ENCODE measurements at regions of chr3 and their contacts with region 1.

Region 1: DNA sequence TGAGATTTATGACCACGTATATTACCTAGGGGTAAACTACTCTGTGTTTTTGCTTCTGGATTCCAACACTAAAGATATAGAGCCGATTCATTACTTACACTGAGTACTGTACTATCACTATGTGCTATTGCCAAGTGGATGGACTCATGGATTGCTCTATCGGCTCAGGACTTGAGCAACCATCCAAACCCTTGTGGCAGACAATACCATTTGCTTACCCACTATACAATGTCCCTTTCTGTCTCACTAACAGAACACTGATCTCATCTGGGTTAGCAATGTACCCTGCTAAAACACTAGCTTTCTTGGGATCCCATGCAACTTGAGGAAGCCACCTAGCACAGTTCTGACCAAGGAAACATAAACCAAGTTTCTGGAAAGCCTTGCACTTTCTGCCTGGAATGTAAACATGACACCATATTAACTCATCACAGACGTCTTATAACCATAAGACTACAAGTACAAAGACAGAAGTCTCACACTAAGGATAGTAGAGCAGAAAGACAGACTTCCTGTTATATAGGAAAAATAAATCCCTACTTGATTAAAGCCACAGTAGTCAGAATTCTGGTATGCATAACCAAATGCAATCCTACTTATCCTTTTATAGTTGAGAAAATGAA is 38.6 kb downstream of the HACD2 start:
- DNase-seq: peak; percentile 26
- H3K4me3 ChIP-seq: no peak overlapping the region
- H3K27me3 ChIP-seq: no peaks in the 10 kb centered on the region
- CTCF ChIP-seq: no peak

Region 2: GRCh38 chr3:123258811-123259420 is 287.3 kb before region 1 on chr3:
- CTCF ChIA-PET with region 1: interaction called, 5 read pairs
- POLR2A ChIA-PET with region 1: interaction called, 11 read pairs
- DNase-seq: no peak
- H3K4me3 ChIP-seq: no peak overlapping the region
- H3K27me3 ChIP-seq: no peaks in the 10 kb centered on the region
- CTCF ChIP-seq: peak; percentile 67